ENCODE measurements at regions of chr1 and their contacts with region 1.

Region 1: GRCh38 chr1:223233410-223234169 is 90.5 kb upstream of the TLR5 start:
- DNase-seq: no peak
- H3K4me3 ChIP-seq: no peak overlapping the region
- H3K4me3 Mint-ChIP-seq: peak overlapping the region in 3 of 8 donors; percentile 2 to 71 (median 66)
- H3K27ac ChIP-seq: no peak overlapping the region
- H3K27ac Mint-ChIP-seq: peak overlapping the region; percentile 44 to 95 (median 65)
- H3K4me1 ChIP-seq: peaks cover 62% of the 10 kb centered on the region
- H3K4me1 Mint-ChIP-seq: peaks cover 25 to 65% (median 44%) of the 10 kb centered on the region in 4 donors
- H3K27me3 ChIP-seq: no peaks in the 10 kb centered on the region
- H3K27me3 Mint-ChIP-seq: peaks cover 0 to 1% of the 10 kb centered on the region in 2 donors

Region 2: DNA sequence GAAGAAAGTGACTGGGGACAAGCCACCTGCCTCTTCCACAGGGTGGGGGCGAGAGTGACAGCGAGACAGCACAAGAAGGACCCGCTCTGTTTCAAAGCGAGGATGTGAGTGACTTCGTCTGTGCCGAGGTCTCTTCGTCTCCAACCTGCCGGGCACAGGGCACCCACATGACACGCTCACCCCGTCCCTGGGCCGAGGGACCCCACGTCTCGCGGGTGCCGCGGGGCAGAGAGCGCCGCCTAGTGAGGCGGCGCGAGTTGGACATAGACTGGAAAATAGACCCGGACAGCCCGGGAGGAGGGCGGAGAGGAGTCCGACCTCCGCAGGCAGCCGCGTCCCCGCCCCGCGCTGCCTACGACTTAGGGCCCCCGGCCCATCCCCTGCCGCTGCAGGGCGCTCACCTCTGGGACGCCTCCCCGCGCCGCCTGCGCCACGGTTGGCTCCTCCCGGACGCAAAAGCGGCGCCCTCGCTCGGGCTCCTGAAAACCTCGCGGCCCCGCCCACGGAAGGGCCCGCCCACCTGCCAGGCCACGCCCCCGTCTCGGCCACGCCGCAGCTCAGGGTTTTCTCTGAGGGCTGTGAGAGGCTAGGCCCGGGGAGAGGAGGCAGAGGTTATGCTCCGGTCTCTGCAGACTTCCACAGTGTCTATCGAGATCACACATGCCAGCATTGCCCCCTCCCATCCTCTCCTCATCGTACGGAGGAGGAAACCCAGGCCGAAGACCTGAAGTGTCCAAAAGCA is 90.6 kb before region 1 on chr1 and contains the start of gene TLR5:
- CTCF ChIA-PET with region 1: interaction called, 5 read pairs
- POLR2A ChIA-PET with region 1: interaction called, 13 read pairs
- intact Hi-C with region 1: loop called (anchors 1 kb)
- DNase-seq: peak; percentile 82 to 87 (median 84)
- H3K4me3 ChIP-seq: peak within 1 kb of the TSS; percentile 6 to 65
- H3K4me3 Mint-ChIP-seq: peak within 1 kb of the TSS; percentile 72 to 87 (median 84)
- H3K27ac ChIP-seq: peak within 1 kb of the TSS; percentile 44
- H3K27ac Mint-ChIP-seq: peak within 1 kb of the TSS; percentile 68 to 92 (median 87)
- H3K4me1 ChIP-seq: peaks cover 19% of the 10 kb centered on the region
- H3K4me1 Mint-ChIP-seq: peaks cover 13 to 31% (median 21%) of the 10 kb centered on the region in 4 donors
- H3K27me3 ChIP-seq: no peaks in the 10 kb centered on the region
- H3K27me3 Mint-ChIP-seq: no peaks in the 10 kb centered on the region
- total RNA-seq, gene TLR5: 5.9 to 7.1 TPM

Region 3: GRCh38 chr1:223189903-223190724 is 43.5 kb before region 1 on chr1:
- CTCF ChIA-PET with region 1: no interaction called
- POLR2A ChIA-PET with region 1: no interaction called
- intact Hi-C with region 1: loop called (anchors 10 kb)
- DNase-seq: peak; percentile 33 to 68 (median 41)
- H3K4me3 ChIP-seq: no peak overlapping the region
- H3K4me3 Mint-ChIP-seq: peak overlapping the region; percentile 23 to 78 (median 56)
- H3K27ac ChIP-seq: no peak overlapping the region
- H3K27ac Mint-ChIP-seq: peak overlapping the region; percentile 6 to 93 (median 60)
- H3K4me1 ChIP-seq: peaks cover 36% of the 10 kb centered on the region
- H3K4me1 Mint-ChIP-seq: peaks cover 25 to 53% (median 37%) of the 10 kb centered on the region in 4 donors
- H3K27me3 ChIP-seq: no peaks in the 10 kb centered on the region
- H3K27me3 Mint-ChIP-seq: no peaks in the 10 kb centered on the region

Region 4: GRCh38 chr1:223244366-223245103 is 10.9 kb after region 1 on chr1:
- CTCF ChIA-PET with region 1: no interaction called
- POLR2A ChIA-PET with region 1: interaction called, 7 read pairs
- intact Hi-C with region 1: loop called (anchors 2 kb)
- DNase-seq: peak in 2 of 5 donors; percentile 16 to 43
- H3K4me3 ChIP-seq: no peak overlapping the region
- H3K4me3 Mint-ChIP-seq: no peak overlapping the region
- H3K27ac ChIP-seq: no peak overlapping the region
- H3K27ac Mint-ChIP-seq: peak overlapping the region in 3 of 7 donors; percentile 5 to 81 (median 26)
- H3K4me1 ChIP-seq: peaks cover 39% of the 10 kb centered on the region
- H3K4me1 Mint-ChIP-seq: peaks cover 22 to 45% (median 32%) of the 10 kb centered on the region in 4 donors
- H3K27me3 ChIP-seq: no peaks in the 10 kb centered on the region
- H3K27me3 Mint-ChIP-seq: peaks cover 4 to 5% of the 10 kb centered on the region in 2 donors

Region 5: GRCh38 chr1:223276029-223276428 is 42.4 kb after region 1 on chr1:
- CTCF ChIA-PET with region 1: no interaction called
- POLR2A ChIA-PET with region 1: no interaction called
- intact Hi-C with region 1: no loop called
- DNase-seq: no peak
- H3K4me3 ChIP-seq: no peak overlapping the region
- H3K4me3 Mint-ChIP-seq: no peak overlapping the region
- H3K27ac ChIP-seq: no peak overlapping the region
- H3K27ac Mint-ChIP-seq: no peak overlapping the region
- H3K4me1 ChIP-seq: no peaks in the 10 kb centered on the region
- H3K4me1 Mint-ChIP-seq: no peaks in the 10 kb centered on the region
- H3K27me3 ChIP-seq: no peaks in the 10 kb centered on the region
- H3K27me3 Mint-ChIP-seq: peaks cover 3 to 4% of the 10 kb centered on the region in 2 donors

Region 6: GRCh38 chr1:223363856-223364684 is 130.5 kb after region 1 on chr1 and contains the start of gene SUSD4:
- CTCF ChIA-PET with region 1: no interaction called
- POLR2A ChIA-PET with region 1: interaction called, 4 read pairs
- intact Hi-C with region 1: loop called (anchors 5 kb)
- DNase-seq: peak; percentile 71 to 82 (median 78)
- H3K4me3 ChIP-seq: peak within 1 kb of the TSS; percentile 33 to 59
- H3K4me3 Mint-ChIP-seq: peak within 1 kb of the TSS; percentile 89 to 94 (median 92)
- H3K27ac ChIP-seq: no peak within 1 kb of the TSS
- H3K27ac Mint-ChIP-seq: peak within 1 kb of the TSS in 6 of 7 donors; percentile 57 to 87 (median 82)
- H3K4me1 ChIP-seq: peaks cover 19% of the 10 kb centered on the region
- H3K4me1 Mint-ChIP-seq: peaks cover 12 to 32% (median 18%) of the 10 kb centered on the region in 4 donors
- H3K27me3 ChIP-seq: no peaks in the 10 kb centered on the region
- H3K27me3 Mint-ChIP-seq: peaks cover 0 to 4% of the 10 kb centered on the region in 2 donors
- total RNA-seq, gene SUSD4: 2.9 to 3.0 TPM

Measured in CD4-positive, alpha-beta memory T cell (primary cell).